IMR-90 (cell line): ENCODE measurements at regions of chr1 and their contacts with region 1.

Region 1: DNA sequence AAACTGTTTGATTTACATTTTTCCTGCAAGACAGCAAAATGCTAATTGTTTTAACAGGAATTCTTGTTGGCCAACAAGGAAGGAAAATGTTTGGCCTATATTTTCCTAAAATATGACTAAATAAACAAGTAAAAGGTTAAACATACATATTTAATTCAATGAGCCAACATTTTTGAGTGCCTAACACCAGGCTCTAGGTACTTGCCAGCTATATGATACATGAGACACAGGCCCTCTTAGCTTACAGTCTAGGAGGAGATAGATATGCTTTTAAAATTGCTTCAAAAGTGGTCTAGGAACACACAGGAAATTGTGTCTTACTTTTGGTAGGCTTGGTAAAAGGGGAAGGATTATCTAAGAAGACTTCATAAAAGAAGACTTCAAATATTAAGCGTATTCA is 50.9 kb downstream of the PIGK start:
- DNase-seq: peak; percentile 6
- ATAC-seq: peak; percentile 65
- H3K4me3 ChIP-seq: no peak overlapping the region
- H3K27ac ChIP-seq: no peak overlapping the region
- H3K4me1 ChIP-seq: no peaks in the 10 kb centered on the region
- H3K27me3 ChIP-seq: no peaks in the 10 kb centered on the region
- CTCF ChIP-seq: no peak
- POLR2A ChIP-seq: no peak
- RAD21 ChIP-seq: no peak

Region 2: GRCh38 chr1:77197351-77197750 is 29.0 kb after region 1 on chr1:
- CTCF ChIA-PET with region 1: no interaction called
- POLR2A ChIA-PET with region 1: no interaction called
- dilution Hi-C with region 1: no loop called
- in situ Hi-C with region 1: no loop called
- intact Hi-C with region 1: loop called (anchors 5 kb)
- DNase-seq: no peak
- ATAC-seq: no peak
- H3K4me3 ChIP-seq: no peak overlapping the region
- H3K27ac ChIP-seq: no peak overlapping the region
- H3K4me1 ChIP-seq: no peaks in the 10 kb centered on the region
- H3K27me3 ChIP-seq: no peaks in the 10 kb centered on the region
- CTCF ChIP-seq: no peak
- POLR2A ChIP-seq: no peak
- RAD21 ChIP-seq: no peak